ENCODE measurements at regions of chr1 and their contacts with region 1.

Region 1: DNA sequence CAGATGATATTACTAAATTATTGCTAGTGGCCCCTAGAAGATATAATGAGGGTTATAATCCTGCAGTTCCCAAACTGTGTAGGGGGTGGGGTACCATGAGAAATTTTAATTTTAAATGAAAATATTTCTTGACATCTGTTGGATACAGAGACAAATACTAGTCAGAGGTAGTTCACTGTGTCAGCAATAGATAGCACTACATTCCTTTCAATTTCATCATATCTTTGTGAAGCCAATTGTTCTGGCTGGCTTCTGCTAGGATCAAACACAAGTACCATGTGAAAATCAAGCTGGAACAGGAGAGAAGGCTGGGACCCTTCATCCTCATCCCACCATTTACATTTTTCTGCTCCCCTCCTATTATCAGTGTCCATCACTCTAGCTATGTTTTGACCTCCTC is 208.1 kb downstream of the USH2A start:
- DNase-seq: no peak
- ATAC-seq: no peak
- H3K4me3 ChIP-seq: no peak overlapping the region
- H3K27ac ChIP-seq: no peak overlapping the region
- H3K4me1 ChIP-seq: no peaks in the 10 kb centered on the region
- H3K27me3 ChIP-seq: no peaks in the 10 kb centered on the region
- CTCF ChIP-seq: no peak
- POLR2A ChIP-seq: no peak

Region 2: GRCh38 chr1:216238844-216239243 is 23.7 kb after region 1 on chr1:
- in situ Hi-C with region 1: no loop called
- intact Hi-C with region 1: loop called (anchors 2 kb)
- DNase-seq: no peak
- ATAC-seq: no peak
- H3K4me3 ChIP-seq: no peak overlapping the region
- H3K27ac ChIP-seq: no peak overlapping the region
- H3K4me1 ChIP-seq: no peaks in the 10 kb centered on the region
- H3K27me3 ChIP-seq: no peaks in the 10 kb centered on the region
- CTCF ChIP-seq: no peak
- POLR2A ChIP-seq: no peak

Measured in gastrocnemius medialis (tissue), 4 donors.